Activated CD4-positive, alpha-beta T cell treated with anti-CD3 and anti-CD28 coated beads, Interleukin-2, amount 10 ng/mL, durations not matched to agents 7 days and 5 days (primary cell): ENCODE measurements at regions of chr7 and their contacts with region 1.

Region 1: GRCh38 chr7:92667816-92668535 is 77.8 kb upstream of the FAM133B start:
- DNase-seq: no peak
- H3K4me3 Mint-ChIP-seq: no peak overlapping the region
- H3K27ac Mint-ChIP-seq: no peak overlapping the region
- H3K4me1 Mint-ChIP-seq: peaks cover 53% of the 10 kb centered on the region
- H3K27me3 Mint-ChIP-seq: no peaks in the 10 kb centered on the region

Region 2: DNA sequence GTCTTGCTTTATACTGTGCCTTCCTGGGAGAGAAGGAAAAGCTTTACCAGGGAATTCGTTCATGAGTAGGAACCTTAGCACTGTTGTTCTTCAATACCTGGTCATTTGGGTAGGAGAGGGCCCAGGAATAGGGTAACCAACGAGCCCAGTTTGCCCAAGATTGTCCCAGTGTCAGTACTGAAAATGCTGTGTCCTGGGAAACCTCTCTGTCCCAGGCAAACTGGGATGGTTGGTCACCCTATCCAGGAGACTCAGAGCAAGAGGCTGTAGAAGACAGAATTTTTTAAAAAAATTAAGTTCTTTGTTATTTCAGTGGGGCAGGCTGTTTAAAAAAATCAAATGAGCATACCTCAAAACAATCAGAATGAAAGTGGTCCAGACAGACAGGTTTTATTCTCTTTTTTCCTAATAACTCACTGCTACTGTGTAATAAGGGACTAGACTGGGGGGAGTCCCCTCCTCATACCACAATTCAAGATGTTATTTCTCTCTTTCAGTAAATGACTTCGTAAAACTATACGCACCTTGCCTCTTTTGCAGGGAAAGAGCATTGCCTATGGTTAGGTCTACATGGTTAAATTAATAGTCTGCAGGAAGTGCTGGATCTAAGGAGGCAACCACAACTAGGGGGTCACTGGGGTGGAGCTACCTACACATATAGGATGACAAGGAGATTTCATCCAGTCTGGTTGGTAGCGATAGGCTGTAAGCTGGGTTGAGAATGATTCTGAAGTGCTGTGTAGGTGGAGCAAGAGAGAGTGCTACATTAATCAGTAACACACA is 36.7 kb before region 1 on chr7:
- CTCF ChIA-PET with region 1: no interaction called
- POLR2A ChIA-PET with region 1: no interaction called
- DNase-seq: no peak
- H3K4me3 Mint-ChIP-seq: no peak overlapping the region
- H3K27ac Mint-ChIP-seq: peak overlapping the region; percentile 65
- H3K4me1 Mint-ChIP-seq: peaks cover 63% of the 10 kb centered on the region
- H3K27me3 Mint-ChIP-seq: no peaks in the 10 kb centered on the region

Region 3: GRCh38 chr7:92641921-92642511 is 26.0 kb before region 1 on chr7:
- CTCF ChIA-PET with region 1: interaction called, 16 read pairs
- POLR2A ChIA-PET with region 1: interaction called, 3 read pairs
- DNase-seq: peak; percentile 47
- H3K4me3 Mint-ChIP-seq: peak overlapping the region; percentile 26
- H3K27ac Mint-ChIP-seq: peak overlapping the region; percentile 85
- H3K4me1 Mint-ChIP-seq: peaks cover 83% of the 10 kb centered on the region
- H3K27me3 Mint-ChIP-seq: no peaks in the 10 kb centered on the region

Region 4: GRCh38 chr7:92695308-92696261 is 27.6 kb after region 1 on chr7:
- CTCF ChIA-PET with region 1: no interaction called
- POLR2A ChIA-PET with region 1: no interaction called
- DNase-seq: no peak
- H3K4me3 Mint-ChIP-seq: peak overlapping the region; percentile 42
- H3K27ac Mint-ChIP-seq: peak overlapping the region; percentile 71
- H3K4me1 Mint-ChIP-seq: peaks cover 48% of the 10 kb centered on the region
- H3K27me3 Mint-ChIP-seq: no peaks in the 10 kb centered on the region

Region 5: DNA sequence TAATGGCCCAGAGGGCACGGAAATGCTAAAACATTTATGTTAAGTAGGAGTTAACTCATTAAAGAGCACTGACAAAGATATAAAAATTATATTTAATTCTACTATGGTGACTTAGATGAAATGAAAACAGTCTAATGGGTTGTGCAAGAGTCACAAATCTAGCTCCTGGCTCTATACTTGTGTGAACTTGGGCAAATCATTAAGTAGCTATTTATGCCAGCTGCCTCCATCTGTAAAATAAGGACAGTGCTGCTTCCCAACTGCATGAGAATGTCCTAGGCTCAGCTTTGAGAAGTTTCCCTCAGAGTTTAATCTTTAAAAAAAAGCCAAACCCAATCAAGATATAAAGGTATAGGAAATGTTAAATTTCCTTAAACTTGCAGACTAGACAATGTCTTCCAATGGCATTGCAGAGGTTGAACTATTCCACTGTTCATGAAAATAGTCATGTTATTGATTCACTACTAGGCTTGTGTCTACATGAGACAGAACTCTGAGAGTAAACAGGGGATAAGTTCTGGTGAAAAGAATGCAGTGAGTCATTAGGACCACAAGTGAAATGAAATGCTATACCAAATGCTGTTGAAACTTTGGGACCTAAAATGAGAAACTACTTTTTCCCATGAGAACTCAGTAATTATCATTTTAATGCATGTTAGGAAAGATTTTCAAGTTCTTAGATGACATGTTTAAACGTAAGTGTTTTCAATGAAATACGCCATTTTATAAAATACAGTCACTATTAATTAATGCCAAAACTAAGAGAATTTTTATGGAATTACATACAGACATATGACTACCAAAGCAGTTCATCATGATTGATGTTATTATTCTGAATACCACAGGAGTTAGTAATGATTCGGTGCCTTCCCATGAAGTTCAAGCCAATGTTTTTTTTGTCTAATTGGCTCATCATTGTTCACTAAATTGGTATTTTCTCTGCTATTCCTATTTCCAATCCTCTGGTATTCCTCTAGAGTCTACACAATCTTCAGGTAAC is 84.2 kb after region 1 on chr7:
- CTCF ChIA-PET with region 1: no interaction called
- POLR2A ChIA-PET with region 1: no interaction called
- DNase-seq: no peak
- H3K4me3 Mint-ChIP-seq: no peak overlapping the region
- H3K27ac Mint-ChIP-seq: no peak overlapping the region
- H3K4me1 Mint-ChIP-seq: peaks cover 50% of the 10 kb centered on the region
- H3K27me3 Mint-ChIP-seq: no peaks in the 10 kb centered on the region